ENCODE measurements at regions of chr9 and their contacts with region 1.

Region 1: DNA sequence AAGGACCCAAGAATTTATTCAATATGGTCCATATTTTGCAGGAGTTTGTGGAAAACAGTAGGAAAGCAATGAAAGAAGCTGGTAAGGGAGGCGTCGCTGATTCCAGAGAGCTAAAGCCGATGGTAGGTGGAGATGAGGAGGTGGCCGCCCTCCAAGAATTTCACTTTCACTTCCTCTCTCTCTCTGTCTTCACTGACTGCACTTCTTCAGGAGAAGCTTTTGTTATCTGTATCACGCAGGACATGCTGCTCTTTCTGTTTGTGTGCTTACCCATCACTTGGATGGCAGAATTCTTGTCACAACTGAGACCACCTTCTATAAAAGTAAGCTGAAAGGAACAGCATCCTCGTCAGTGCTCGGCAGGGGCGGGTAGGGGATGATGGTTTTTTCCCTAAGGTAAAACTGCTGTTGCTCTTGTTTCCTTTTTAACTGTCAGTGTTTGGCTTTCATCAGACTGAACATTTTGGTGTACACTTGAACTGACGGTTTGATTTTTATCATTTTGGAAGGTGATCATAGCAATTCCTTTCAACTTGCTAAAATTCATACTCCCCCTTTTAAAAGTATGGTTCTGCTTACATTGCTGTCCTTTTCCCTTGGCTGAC is 62.4 kb upstream of the FSD1L start:
- H3K4me3 Mint-ChIP-seq: no peak overlapping the region
- H3K27ac Mint-ChIP-seq: no peak overlapping the region
- H3K4me1 Mint-ChIP-seq: peaks cover 8% of the 10 kb centered on the region
- H3K27me3 Mint-ChIP-seq: no peaks in the 10 kb centered on the region

Region 2: GRCh38 chr9:105328872-105329718 is 56.4 kb before region 1 on chr9:
- intact Hi-C with region 1: loop called (anchors 10 kb)
- H3K4me3 Mint-ChIP-seq: no peak overlapping the region
- H3K27ac Mint-ChIP-seq: no peak overlapping the region
- H3K4me1 Mint-ChIP-seq: peaks cover 44% of the 10 kb centered on the region
- H3K27me3 Mint-ChIP-seq: no peaks in the 10 kb centered on the region

Measured in dendritic cell treated with granulocyte-macrophage colony-stimulating factor and Interleukin-4, amounts not matched to agents 40 ng/mL and 50 ng/mL, for 4 days (primary cell).